ENCODE measurements at regions of chr20 and their contacts with region 1.

Region 1: GRCh38 chr20:8389381-8390036 is 257.4 kb downstream of the PLCB1 start:
- DNase-seq: peak in 1 of 2 experiments; percentile 41
- H3K4me3 ChIP-seq: no peak overlapping the region
- H3K27ac ChIP-seq: no peak overlapping the region
- H3K4me1 ChIP-seq: no peaks in the 10 kb centered on the region
- H3K27me3 ChIP-seq: no peaks in the 10 kb centered on the region
- CTCF ChIP-seq: peak; percentile 71

Region 2: GRCh38 chr20:7935027-7935551 is 454.4 kb before region 1 on chr20:
- CTCF ChIA-PET with region 1: interaction called, 5 read pairs
- POLR2A ChIA-PET with region 1: no interaction called
- intact Hi-C with region 1: loop called (anchors 5 kb)
- DNase-seq: no peak
- H3K4me3 ChIP-seq: no peak overlapping the region
- H3K27ac ChIP-seq: no peak overlapping the region
- H3K4me1 ChIP-seq: no peaks in the 10 kb centered on the region
- H3K27me3 ChIP-seq: no peaks in the 10 kb centered on the region; the same call in 1 of the 2 replicates
- CTCF ChIP-seq: no peak

Region 3: DNA sequence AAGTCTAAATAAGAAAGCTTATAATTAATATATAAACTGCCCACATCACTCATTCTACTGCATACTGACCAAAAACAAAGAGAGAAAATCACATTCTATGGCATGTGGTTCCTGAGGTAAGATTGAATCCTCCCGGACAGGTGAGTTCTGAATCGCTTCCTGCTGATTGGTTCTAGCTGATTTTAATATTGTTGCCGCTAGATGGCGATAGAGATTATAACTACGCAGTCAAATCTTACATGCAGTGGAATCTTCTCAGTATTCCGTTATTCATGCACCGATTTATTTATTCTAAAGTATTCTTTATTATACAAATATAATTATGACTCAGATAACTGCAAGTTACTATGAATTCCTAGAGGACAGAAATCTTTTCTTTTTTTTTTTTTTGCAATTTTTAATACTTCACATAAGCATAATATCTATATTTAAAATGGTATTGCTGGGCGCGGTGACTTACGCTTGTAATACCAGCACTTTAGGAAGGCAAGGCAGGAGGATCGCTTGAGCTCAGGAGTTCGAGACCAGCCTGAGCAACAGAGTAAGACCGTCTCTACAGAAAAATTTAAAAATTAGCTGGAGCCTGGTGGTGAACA is 345.7 kb before region 1 on chr20:
- CTCF ChIA-PET with region 1: no interaction called
- POLR2A ChIA-PET with region 1: no interaction called
- intact Hi-C with region 1: loop called (anchors 5 kb)
- DNase-seq: peak; percentile 12 to 44
- H3K4me3 ChIP-seq: no peak overlapping the region
- H3K27ac ChIP-seq: no peak overlapping the region
- H3K4me1 ChIP-seq: peaks cover 10% of the 10 kb centered on the region; the same call in 1 of the 2 replicates
- H3K27me3 ChIP-seq: peaks cover 3% of the 10 kb centered on the region; the same call in 1 of the 2 replicates
- CTCF ChIP-seq: peak; percentile 87

Region 4: GRCh38 chr20:8244637-8245036 is 144.9 kb before region 1 on chr20:
- CTCF ChIA-PET with region 1: no interaction called
- POLR2A ChIA-PET with region 1: no interaction called
- intact Hi-C with region 1: no loop called
- DNase-seq: no peak
- H3K4me3 ChIP-seq: no peak overlapping the region
- H3K27ac ChIP-seq: no peak overlapping the region
- H3K4me1 ChIP-seq: no peaks in the 10 kb centered on the region
- H3K27me3 ChIP-seq: no peaks in the 10 kb centered on the region
- CTCF ChIP-seq: no peak

Region 5: DNA sequence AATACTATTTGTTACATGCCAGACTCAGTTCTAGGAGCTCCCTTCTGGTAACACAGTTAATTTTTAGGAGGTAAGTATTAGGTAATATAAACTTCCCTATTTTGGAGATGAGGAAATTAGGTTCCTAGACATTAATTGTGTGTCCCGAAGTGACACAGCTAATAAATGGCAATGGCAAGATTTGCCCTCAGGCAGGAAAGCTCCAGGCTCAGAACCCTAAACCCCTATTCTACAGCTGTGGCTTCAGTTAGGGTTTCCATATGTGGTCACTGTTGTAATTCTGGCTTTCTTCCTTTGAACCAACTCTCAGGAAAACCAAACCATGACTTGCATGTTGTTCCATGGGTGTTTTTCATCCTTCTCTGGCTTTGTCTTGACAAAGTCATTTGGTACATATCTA is 69.2 kb before region 1 on chr20:
- CTCF ChIA-PET with region 1: no interaction called
- POLR2A ChIA-PET with region 1: no interaction called
- intact Hi-C with region 1: no loop called
- DNase-seq: no peak
- H3K4me3 ChIP-seq: no peak overlapping the region
- H3K27ac ChIP-seq: no peak overlapping the region
- H3K4me1 ChIP-seq: no peaks in the 10 kb centered on the region
- H3K27me3 ChIP-seq: no peaks in the 10 kb centered on the region
- CTCF ChIP-seq: no peak

Region 6: DNA sequence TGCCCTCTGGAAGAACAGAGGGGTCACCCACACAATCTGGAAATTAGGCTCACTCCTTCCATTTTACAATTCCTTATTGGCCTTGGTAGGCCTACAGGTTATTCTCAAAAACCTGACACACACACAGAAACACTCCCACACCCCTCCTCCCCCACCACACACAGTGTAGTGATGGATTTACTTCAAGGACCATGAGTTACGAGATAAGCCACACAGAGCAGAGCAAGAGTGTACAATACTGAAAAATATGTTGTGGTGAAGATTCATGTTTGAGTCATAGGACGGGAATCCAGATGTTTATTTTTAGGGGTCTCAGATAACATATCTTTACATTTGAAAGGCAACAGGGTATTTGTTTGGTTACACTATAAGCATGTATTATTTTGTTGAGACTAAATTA is 34.5 kb after region 1 on chr20:
- CTCF ChIA-PET with region 1: no interaction called
- POLR2A ChIA-PET with region 1: no interaction called
- intact Hi-C with region 1: no loop called
- DNase-seq: no peak
- H3K4me3 ChIP-seq: no peak overlapping the region
- H3K27ac ChIP-seq: no peak overlapping the region
- H3K4me1 ChIP-seq: no peaks in the 10 kb centered on the region
- H3K27me3 ChIP-seq: no peaks in the 10 kb centered on the region
- CTCF ChIP-seq: no peak